Esophagus muscularis mucosa (tissue), 4 donors: ENCODE measurements at regions of chr1 and their contacts with region 1.

Region 1: DNA sequence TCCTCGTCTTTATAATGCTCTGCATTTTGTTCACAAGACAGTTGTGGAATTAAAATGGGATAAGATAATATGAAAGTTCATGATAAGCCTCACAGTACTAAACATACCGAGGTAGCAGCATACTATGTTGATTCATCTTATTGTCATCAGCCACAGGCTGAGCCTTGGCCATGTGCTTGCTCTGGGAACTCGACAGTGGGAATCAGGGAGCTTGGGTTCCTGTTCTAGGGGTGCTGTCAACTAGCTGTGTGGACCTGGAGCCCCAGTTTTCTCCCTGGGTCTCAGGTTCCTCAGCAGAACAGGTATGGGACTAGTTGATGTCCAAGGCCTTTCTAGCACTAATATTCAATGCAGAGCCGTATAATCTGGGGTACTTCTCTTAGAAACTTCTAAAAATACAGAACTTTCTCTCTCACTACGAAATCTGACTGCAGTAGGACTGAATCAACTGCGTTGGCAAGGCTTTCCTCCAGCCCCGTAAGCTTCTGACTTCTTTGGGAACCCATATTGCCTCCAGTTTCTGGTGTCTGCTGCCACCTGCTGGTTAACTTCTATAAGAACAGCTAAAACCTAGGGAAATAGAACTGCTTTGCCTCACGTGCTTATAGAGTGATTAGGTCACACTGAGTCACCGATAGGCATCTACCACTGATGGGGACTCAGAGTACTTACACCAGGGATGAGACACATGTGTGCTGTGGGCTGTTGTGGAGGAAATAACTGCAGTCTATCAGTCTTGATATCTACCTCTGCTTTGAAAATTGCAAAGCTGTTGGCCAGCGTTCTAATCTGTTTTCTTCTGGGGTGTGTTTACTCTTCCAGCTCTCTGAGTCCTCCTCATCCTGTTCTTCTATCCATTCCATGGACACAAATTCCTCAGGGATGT is 110.9 kb downstream of the RGL1 start:
- DNase-seq: peak; percentile 95
- H3K4me3 ChIP-seq: peak overlapping the region in 1 of 4 donors; percentile 9
- H3K27ac ChIP-seq: peak overlapping the region; percentile 62 to 77 (median 74)
- H3K4me1 ChIP-seq: peaks cover 8 to 39% (median 30%) of the 10 kb centered on the region in 4 donors
- H3K27me3 ChIP-seq: no peaks in the 10 kb centered on the region
- CTCF ChIP-seq: peak; percentile 81 to 94 (median 86)
- EP300 ChIP-seq: no peak
- POLR2A ChIP-seq: no peak

Region 2: DNA sequence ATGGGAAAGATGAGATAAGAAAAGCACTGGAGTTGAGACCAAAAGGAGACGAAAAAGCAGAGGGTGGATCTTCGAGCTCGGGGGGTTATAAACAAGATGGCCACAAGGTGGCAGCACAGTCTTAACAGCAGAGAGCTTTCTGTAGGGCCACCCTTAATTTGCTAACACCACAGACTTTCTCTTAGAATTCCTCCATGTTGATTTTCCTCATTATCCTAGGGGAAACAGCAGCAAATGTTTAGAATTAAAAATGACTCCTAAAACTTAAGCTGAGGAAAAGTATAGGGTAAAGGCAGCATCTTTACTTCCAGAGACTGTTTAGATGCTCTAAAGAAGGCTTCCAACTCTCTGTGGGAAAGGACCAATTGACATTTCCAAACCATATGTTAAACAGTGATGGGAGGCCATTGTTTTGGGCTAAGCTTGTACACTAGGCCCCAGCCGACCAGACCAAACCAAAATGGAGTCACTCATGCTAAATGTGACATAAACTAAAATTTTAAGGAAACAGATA is 260.2 kb before region 1 on chr1:
- intact Hi-C with region 1: loop called (anchors 1 kb)
- DNase-seq: peak; percentile 96
- H3K4me3 ChIP-seq: no peak overlapping the region
- H3K27ac ChIP-seq: peak overlapping the region in 1 of 4 donors; percentile 4
- H3K4me1 ChIP-seq: peaks cover 25 to 41% (median 37%) of the 10 kb centered on the region in 4 donors
- H3K27me3 ChIP-seq: no peaks in the 10 kb centered on the region
- CTCF ChIP-seq: peak; percentile 90 to 93 (median 91)
- EP300 ChIP-seq: no peak
- POLR2A ChIP-seq: no peak

Region 3: DNA sequence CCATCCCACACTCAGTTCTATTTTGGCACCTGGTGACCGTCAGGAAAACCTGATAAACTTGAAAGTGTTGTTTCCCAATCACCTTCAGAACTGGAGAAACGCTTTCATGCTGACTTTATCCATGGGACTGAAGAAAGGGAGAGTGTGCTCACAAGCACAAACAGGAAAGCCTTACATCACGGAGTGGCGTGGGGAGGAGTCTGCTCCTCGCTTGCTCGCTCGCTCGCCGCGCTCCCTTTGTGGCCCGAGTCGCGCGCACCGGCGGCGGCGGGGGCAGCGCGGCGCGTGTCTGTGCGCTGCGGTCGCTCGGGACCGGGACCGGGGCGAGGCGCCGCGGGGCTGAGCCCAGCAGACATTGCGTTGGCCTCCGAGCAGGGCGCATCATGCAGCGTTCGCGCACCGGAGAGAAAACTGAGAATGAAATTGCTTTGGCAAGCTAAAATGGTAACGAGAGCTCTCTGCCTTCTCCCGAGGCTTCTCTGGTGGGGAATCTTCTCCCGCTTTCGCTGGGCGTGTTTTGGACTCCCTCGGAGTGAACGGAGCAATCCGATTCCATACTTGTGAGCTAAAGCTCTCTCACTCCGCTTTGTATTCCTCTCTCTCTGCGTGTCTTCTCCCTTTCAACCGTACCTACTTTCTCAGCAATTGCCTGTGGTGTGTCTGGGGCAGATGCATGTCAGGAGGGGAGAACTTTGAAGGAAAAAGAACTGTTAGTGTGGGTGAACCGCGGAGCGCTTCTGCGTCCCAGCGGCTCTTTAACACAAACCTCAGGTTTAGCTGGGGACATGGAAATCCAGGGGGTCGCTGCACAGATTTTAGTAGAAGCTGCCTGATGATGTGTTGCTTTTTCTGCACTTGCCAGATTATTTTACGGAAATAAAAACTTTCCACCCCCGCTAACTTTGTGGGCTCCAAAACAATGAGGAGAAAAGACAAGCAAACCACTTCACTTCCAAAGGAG is 110.7 kb before region 1 on chr1 and contains the start of gene RGL1:
- intact Hi-C with region 1: loop called (anchors 5 kb)
- DNase-seq: no peak
- H3K4me3 ChIP-seq: peak within 1 kb of the TSS; percentile 61 to 71 (median 71)
- H3K27ac ChIP-seq: peak within 1 kb of the TSS; percentile 82 to 86 (median 86)
- H3K4me1 ChIP-seq: peaks cover 11 to 48% (median 45%) of the 10 kb centered on the region in 4 donors
- H3K27me3 ChIP-seq: no peaks in the 10 kb centered on the region
- CTCF ChIP-seq: no peak
- EP300 ChIP-seq: no peak
- POLR2A ChIP-seq: peak; percentile 31
- total RNA-seq, gene RGL1: 31.5 to 51.5 (median 37.5) TPM

Region 4: GRCh38 chr1:183968386-183968785 is 52.5 kb after region 1 on chr1:
- intact Hi-C with region 1: no loop called
- DNase-seq: no peak
- H3K4me3 ChIP-seq: no peak overlapping the region
- H3K27ac ChIP-seq: no peak overlapping the region
- H3K4me1 ChIP-seq: no peaks in the 10 kb centered on the region
- H3K27me3 ChIP-seq: no peaks in the 10 kb centered on the region
- CTCF ChIP-seq: no peak
- EP300 ChIP-seq: no peak
- POLR2A ChIP-seq: no peak